ENCODE measurements at regions of chr15 and their contacts with region 1.

Region 1: GRCh38 chr15:55290528-55291057 is 980 bp upstream of the RAB27A start:
- DNase-seq: peak; percentile 92
- ATAC-seq: peak; percentile 80
- H3K4me3 Mint-ChIP-seq: peak overlapping the region; percentile 89
- H3K27ac Mint-ChIP-seq: peak overlapping the region; percentile 89
- H3K4me1 Mint-ChIP-seq: peaks cover 30% of the 10 kb centered on the region
- H3K27me3 Mint-ChIP-seq: no peaks in the 10 kb centered on the region

Region 2: GRCh38 chr15:55196458-55197361 is 93.9 kb before region 1 on chr15 and contains the start of gene RSL24D1:
- CTCF ChIA-PET with region 1: interaction called, 7 read pairs
- POLR2A ChIA-PET with region 1: interaction called, 3 read pairs
- intact Hi-C with region 1: loop called (anchors 1 kb)
- DNase-seq: peak; percentile 97
- ATAC-seq: peak; percentile 99
- H3K4me3 Mint-ChIP-seq: no peak within 1 kb of the TSS
- H3K27ac Mint-ChIP-seq: no peak within 1 kb of the TSS
- H3K4me1 Mint-ChIP-seq: peaks cover 17% of the 10 kb centered on the region
- H3K27me3 Mint-ChIP-seq: no peaks in the 10 kb centered on the region
- total RNA-seq, gene RSL24D1: 152 to 188 TPM

Region 3: DNA sequence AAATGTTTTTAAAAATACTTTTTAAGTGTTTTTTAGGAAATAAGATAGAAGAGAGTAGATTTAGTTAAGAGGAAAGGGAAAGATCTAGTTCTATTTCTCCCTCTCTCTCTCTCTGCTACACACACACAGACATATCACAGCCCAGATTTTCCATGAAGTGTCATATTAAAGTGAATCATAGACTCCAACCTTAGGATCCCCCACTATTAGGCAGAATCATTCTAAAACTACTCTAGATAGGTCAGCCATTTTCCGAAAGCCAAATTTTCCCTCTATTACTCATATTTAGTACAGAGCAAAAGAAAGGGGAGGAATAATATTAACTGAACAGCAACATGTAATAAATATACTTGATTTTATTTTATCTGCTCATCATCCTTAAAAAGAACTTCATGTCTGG is 48.7 kb before region 1 on chr15:
- CTCF ChIA-PET with region 1: interaction called, 3 read pairs
- POLR2A ChIA-PET with region 1: no interaction called
- intact Hi-C with region 1: loop called in 1 of 2 experiments (anchors 2 kb)
- DNase-seq: no peak
- ATAC-seq: peak; percentile 33
- H3K4me3 Mint-ChIP-seq: no peak overlapping the region
- H3K27ac Mint-ChIP-seq: peak overlapping the region; percentile 88
- H3K4me1 Mint-ChIP-seq: peaks cover 78% of the 10 kb centered on the region
- H3K27me3 Mint-ChIP-seq: no peaks in the 10 kb centered on the region

Region 4: DNA sequence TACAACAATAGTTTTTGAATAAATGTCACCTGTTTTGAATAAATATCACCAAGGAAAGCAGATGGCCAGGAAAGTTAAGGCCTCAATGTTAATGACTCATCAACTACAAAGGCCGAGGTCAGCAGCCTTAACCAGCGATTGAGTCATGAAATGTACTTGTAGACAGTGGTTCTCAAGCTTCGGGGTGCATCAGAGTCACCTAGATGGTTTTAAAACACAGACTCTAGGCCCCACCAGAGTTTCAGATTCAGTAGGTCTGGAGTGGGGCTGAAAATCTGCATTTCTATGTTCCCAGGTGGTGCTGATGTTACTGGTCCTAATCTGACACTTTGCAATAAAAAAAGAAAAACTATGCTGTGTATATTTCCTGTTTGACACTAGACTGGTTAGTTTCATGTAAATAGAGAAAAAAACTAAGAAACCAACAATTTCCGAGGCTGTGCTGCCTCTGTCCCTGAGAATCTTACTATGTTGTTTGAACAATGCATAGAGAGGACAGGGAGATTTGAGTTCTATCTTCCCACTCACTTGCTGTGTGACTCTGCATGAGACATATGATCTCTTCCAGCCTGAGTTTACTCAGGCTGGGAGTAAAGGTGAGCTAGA is 10.7 kb before region 1 on chr15:
- CTCF ChIA-PET with region 1: interaction called, 4 read pairs
- POLR2A ChIA-PET with region 1: no interaction called
- intact Hi-C with region 1: loop called (anchors 1 kb)
- DNase-seq: peak; percentile 73
- ATAC-seq: peak; percentile 78
- H3K4me3 Mint-ChIP-seq: peak overlapping the region; percentile 45
- H3K27ac Mint-ChIP-seq: peak overlapping the region; percentile 95
- H3K4me1 Mint-ChIP-seq: peaks cover 95% of the 10 kb centered on the region
- H3K27me3 Mint-ChIP-seq: no peaks in the 10 kb centered on the region

Region 5: DNA sequence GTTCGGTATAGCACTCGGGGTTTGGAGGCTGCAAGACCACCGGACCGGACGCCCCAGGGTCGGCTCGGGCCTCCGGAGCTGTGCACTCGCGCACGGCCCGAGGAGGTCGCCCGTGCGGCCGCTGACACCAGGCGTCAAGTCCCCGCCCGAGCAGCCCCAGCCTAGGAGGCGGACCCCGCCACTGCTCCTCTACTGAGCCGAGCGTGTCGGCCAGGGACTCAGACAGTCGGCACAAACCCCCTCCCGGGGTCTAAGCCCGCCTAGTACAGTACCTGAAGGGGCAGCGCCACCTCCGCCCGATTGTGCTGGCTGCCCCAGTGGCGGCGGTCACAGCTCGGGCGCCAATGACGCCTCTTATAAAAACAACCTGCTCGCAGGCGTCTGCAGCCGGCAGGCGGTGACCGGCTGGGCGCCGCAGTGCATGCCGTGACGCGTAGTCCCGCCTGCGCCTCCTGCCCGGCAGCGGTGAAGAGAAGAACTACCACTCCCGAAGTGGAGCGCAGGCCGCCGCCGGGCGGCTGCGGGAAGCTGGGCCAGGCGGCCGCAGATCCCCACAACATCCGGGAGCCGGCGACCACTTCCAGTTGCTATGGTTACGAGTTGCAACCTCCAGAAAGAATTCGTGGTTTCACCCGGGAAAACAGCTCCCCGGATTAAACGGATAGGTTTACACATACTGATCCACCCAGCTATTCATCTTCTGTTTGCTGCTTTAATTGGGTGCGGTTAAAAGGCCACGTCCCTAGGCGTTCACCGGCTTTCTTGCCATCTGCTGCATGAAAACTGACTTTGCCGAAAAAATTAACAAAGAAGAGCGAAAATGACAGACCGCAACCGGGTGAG is 117.6 kb after region 1 on chr15 and contains the starts of genes CCPG1 and PIERCE2:
- CTCF ChIA-PET with region 1: no interaction called
- POLR2A ChIA-PET with region 1: no interaction called
- intact Hi-C with region 1: loop called in 1 of 2 experiments (anchors 1 kb)
- DNase-seq: peak; percentile 95
- ATAC-seq: peak; percentile 93
- H3K4me3 Mint-ChIP-seq: peak within 1 kb of the TSS; percentile 87
- H3K27ac Mint-ChIP-seq: peak within 1 kb of the TSS; percentile 90
- H3K4me1 Mint-ChIP-seq: peaks cover 24% of the 10 kb centered on the region
- H3K27me3 Mint-ChIP-seq: no peaks in the 10 kb centered on the region
- total RNA-seq, gene CCPG1: 11.3 to 12.2 TPM
- total RNA-seq, gene PIERCE2: 0.34 to 0.81 TPM

Measured in activated CD4-positive, alpha-beta T cell treated with anti-CD3 and anti-CD28 coated beads for 36 hours (primary cell).